Sciatic nerve (tissue), 2 donors: ENCODE measurements at regions of chr16 and their contacts with region 1.

Region 1: GRCh38 chr16:22743401-22743800 is 70.6 kb upstream of the HS3ST2 start:
- DNase-seq: no peak
- ATAC-seq: no peak

Region 2: GRCh38 chr16:21321736-21322135 is 1421.7 kb before region 1 on chr16:
- intact Hi-C with region 1: loop called (anchors 5 kb)
- DNase-seq: no peak
- ATAC-seq: no peak

Region 3: DNA sequence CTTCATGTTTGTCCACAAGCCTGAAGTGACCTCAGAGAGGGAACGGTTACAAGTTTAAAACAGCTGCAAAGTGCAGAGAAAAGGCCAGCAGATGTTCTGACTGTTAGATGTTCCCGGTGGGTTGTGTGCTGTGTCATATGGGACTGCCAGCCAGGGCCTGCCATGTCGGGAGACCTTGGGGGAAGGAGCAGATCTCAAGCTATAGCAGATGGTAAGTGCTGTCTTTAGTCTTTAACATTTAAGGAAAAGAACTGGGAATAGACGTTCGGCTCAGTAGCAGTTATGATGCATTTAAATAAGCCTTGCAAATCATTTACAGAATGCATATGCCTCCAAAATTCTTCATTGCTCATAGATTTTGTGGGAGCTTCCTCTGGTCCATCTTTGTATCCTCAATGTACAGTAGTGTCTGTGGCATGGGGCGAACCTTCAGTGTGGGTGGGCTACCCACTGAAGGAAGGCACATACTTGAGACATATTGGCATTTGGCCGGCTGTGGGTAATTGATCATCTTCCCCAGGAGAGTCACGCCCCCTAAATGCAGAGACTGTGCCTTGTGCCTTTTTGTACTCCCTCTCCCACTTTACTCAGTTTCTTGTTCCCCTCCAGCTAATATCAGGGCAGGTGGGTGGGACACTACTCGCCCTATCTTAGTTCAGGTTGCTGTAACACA is 100.8 kb before region 1 on chr16:
- intact Hi-C with region 1: no loop called
- DNase-seq: no peak
- ATAC-seq: no peak